ENCODE measurements at regions of chr10 and their contacts with region 1.

Region 1: DNA sequence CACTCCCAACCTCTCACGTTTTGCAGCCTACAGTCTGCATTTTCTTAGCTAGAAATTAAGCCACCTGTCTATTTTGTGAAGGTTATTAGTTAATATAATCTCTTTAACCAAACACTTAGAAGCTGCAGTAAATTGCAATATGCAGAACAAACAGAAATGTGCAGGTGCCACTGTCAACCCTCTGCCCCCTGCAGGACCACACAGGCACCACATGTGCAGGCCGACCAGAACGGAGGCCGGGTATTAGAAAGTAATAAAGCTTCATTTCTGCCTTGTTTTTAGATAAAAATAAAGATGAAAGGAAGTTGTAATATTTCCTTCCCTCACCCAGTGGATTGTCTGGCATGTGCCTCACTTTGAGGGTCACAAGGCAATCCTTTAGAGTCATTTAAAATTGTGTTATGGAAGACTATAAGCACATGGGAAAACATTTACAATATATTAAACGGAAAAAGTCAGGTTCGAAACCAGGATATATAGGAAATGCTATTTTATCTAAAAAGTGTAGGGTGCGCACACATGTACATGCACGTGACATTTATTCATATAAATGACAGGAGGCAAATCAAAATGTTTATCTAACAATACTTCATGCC is 158.2 kb downstream of the ARHGAP12 start:
- DNase-seq: peak; percentile 34 to 70 (median 40)
- H3K4me3 ChIP-seq: no peak overlapping the region
- H3K4me3 Mint-ChIP-seq: no peak overlapping the region
- H3K27ac ChIP-seq: no peak overlapping the region
- H3K27ac Mint-ChIP-seq: no peak overlapping the region
- H3K4me1 ChIP-seq: no peaks in the 10 kb centered on the region
- H3K4me1 Mint-ChIP-seq: no peaks in the 10 kb centered on the region
- H3K27me3 ChIP-seq: no peaks in the 10 kb centered on the region
- H3K27me3 Mint-ChIP-seq: no peaks in the 10 kb centered on the region

Region 2: GRCh38 chr10:31759799-31760626 is 10.4 kb before region 1 on chr10:
- CTCF ChIA-PET with region 1: interaction called, 10 read pairs
- POLR2A ChIA-PET with region 1: no interaction called
- DNase-seq: peak; percentile 92 to 98 (median 94)
- H3K4me3 ChIP-seq: peak overlapping the region; percentile 89
- H3K4me3 Mint-ChIP-seq: peak overlapping the region; percentile 34 to 91 (median 86)
- H3K27ac ChIP-seq: peak overlapping the region; percentile 87
- H3K27ac Mint-ChIP-seq: peak overlapping the region; percentile 76 to 99 (median 98)
- H3K4me1 ChIP-seq: peaks cover 12% of the 10 kb centered on the region
- H3K4me1 Mint-ChIP-seq: peaks cover 14 to 23% (median 19%) of the 10 kb centered on the region in 3 donors
- H3K27me3 ChIP-seq: no peaks in the 10 kb centered on the region
- H3K27me3 Mint-ChIP-seq: no peaks in the 10 kb centered on the region

Region 3: DNA sequence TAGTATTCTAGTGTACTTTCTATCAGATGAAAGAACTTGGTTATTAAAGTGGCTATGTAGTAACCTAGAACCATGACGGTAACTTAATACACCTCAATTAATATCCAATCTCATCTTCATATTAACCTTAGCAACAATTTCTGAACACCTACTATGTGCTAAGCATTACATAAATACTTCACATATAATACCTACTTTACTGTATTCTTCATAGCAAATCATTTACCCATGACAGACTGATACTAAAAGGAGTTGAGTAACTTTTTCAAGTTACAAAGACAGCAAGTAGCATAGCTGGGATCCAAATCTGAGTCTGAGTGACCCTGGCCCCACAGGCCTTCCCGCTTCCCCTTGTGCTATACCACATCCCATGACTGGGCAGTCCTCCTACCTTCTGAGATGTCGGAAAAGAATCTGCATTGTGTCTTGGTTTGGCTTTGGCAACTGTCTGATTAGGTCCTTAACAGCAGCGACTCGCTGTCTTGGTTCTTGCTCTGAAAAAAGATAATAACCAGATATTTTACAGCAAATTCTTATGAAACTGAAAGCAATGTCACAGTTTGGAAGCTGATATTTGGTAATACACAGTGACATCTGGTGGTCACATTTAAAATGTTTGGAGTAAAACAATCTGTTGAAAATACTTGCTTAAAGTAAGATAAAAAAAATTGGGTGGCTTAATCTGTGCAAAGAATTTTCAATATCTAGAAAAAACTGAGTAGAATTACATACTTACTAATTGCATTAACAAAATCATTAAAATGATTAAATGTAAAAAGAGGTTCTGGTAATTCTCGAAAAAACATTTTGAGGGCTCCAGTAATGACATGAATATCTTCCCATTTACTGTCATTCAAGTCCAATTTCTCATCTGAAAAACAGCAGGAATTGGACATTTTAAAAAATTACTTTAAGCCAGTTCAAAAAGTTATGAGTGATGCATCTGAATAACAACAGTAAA is 38.1 kb after region 1 on chr10:
- CTCF ChIA-PET with region 1: no interaction called
- POLR2A ChIA-PET with region 1: no interaction called
- DNase-seq: peak in 2 of 5 donors; percentile 42 to 46
- H3K4me3 ChIP-seq: no peak overlapping the region
- H3K4me3 Mint-ChIP-seq: peak overlapping the region in 2 of 7 donors; percentile 39 to 64
- H3K27ac ChIP-seq: no peak overlapping the region
- H3K27ac Mint-ChIP-seq: peak overlapping the region; percentile 43 to 92 (median 86)
- H3K4me1 ChIP-seq: peaks cover 4% of the 10 kb centered on the region
- H3K4me1 Mint-ChIP-seq: peaks cover 4 to 7% (median 6%) of the 10 kb centered on the region in 3 donors
- H3K27me3 ChIP-seq: no peaks in the 10 kb centered on the region
- H3K27me3 Mint-ChIP-seq: no peaks in the 10 kb centered on the region

Region 4: GRCh38 chr10:31875608-31876007 is 105.2 kb after region 1 on chr10:
- CTCF ChIA-PET with region 1: no interaction called
- POLR2A ChIA-PET with region 1: no interaction called
- DNase-seq: no peak
- H3K4me3 ChIP-seq: no peak overlapping the region
- H3K4me3 Mint-ChIP-seq: no peak overlapping the region
- H3K27ac ChIP-seq: no peak overlapping the region
- H3K27ac Mint-ChIP-seq: no peak overlapping the region
- H3K4me1 ChIP-seq: no peaks in the 10 kb centered on the region
- H3K4me1 Mint-ChIP-seq: peaks cover 27 to 54% (median 34%) of the 10 kb centered on the region in 3 donors
- H3K27me3 ChIP-seq: no peaks in the 10 kb centered on the region
- H3K27me3 Mint-ChIP-seq: no peaks in the 10 kb centered on the region

Region 5: GRCh38 chr10:32795598-32796183 is 1025.3 kb after region 1 on chr10:
- CTCF ChIA-PET with region 1: no interaction called
- POLR2A ChIA-PET with region 1: no interaction called
- DNase-seq: peak in 2 of 5 donors; percentile 16 to 17
- H3K4me3 ChIP-seq: no peak overlapping the region
- H3K4me3 Mint-ChIP-seq: no peak overlapping the region
- H3K27ac ChIP-seq: no peak overlapping the region
- H3K27ac Mint-ChIP-seq: peak overlapping the region in 1 of 8 donors; percentile 5
- H3K4me1 ChIP-seq: no peaks in the 10 kb centered on the region
- H3K4me1 Mint-ChIP-seq: peaks cover 0 to 5% (median 3%) of the 10 kb centered on the region in 3 donors
- H3K27me3 ChIP-seq: no peaks in the 10 kb centered on the region
- H3K27me3 Mint-ChIP-seq: no peaks in the 10 kb centered on the region